Lower leg skin (tissue), 4 donors: ENCODE measurements at regions of chr21 and their contacts with region 1.

Region 1: DNA sequence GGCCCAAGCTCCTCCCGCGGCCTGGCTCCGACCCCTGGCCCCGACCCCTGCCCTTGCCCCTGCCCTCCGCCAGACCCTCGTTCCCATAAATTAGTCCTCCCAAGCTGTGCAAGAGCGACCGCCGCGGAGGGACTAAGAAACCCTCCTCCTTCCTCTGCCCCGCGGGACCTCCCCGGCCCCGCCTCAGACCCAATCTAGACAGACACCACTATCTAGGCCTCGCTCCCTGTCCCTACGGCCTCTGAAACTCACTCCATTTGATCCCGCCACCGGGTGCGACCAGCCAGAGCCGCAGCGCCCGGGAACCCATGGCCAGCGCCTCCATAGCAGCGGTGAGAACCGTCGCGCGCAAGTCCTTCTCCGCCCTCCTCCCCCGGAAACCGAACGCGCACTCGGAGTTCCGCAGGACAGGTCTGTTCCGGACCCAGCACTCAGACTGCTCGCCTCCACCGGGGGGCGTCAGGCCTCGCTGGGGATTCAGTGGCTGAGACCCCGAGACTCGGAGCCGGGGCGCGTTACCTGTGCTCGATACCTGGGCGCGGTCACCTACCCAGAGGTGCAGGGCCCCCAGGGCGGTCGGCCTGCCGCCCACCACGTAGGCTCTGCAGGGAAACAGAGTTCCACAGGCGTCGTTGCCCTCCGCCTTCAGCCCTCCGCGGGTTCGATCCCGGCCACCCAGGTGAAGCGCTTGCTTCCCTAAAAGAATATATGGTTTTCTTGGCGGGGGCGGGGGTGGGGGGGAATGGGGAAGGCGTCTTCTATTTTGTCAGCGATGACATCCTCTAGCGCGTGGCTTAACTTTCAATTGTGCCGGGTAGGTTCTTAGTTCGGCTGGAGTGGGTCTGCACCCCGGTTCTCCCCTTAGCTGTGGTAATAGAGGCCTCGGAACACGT is at the start of gene MRPL39:
- DNase-seq: peak; percentile 75 to 97
- H3K4me3 ChIP-seq: peak within 1 kb of the TSS; percentile 79
- CTCF ChIP-seq: no peak
- POLR2A ChIP-seq: no peak
- total RNA-seq, gene MRPL39: 18.0 to 26.5 (median 21.4) TPM

Region 2: DNA sequence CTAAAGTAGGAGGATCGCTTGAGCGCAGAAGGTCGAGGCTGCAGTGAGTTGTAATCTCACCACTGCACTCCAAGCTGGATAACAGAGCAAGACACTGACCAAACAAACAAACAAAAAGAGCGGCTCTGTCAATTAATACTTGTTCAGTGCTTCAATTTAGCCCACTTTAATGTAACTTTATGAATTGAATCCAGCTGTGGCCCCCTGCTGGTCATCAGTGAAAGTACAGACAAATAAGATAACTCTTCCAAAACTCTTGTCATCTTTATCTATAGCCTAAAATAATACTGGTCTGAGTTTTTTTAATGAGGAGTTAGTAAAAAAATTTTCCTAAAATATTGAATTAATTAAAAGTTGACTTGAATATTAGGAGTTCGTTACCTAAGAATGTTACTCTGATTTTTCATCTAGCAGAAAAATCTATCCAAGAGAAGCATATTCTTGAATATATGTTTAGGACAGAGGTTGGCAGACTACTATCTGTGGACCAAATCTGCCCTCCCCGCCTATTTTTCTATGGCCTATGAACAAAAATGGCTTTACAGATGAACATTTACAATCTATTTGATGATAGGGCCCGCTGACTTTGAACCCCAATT is 101.2 kb after region 1 on chr21:
- intact Hi-C with region 1: loop called (anchors 2 kb)
- DNase-seq: peak in 1 of 2 donors; percentile 41
- H3K4me3 ChIP-seq: no peak overlapping the region
- CTCF ChIP-seq: peak in 1 of 3 donors; percentile 46
- POLR2A ChIP-seq: no peak